Calu3 (cell line): ENCODE measurements at regions of chr7 and their contacts with region 1.

Region 1: DNA sequence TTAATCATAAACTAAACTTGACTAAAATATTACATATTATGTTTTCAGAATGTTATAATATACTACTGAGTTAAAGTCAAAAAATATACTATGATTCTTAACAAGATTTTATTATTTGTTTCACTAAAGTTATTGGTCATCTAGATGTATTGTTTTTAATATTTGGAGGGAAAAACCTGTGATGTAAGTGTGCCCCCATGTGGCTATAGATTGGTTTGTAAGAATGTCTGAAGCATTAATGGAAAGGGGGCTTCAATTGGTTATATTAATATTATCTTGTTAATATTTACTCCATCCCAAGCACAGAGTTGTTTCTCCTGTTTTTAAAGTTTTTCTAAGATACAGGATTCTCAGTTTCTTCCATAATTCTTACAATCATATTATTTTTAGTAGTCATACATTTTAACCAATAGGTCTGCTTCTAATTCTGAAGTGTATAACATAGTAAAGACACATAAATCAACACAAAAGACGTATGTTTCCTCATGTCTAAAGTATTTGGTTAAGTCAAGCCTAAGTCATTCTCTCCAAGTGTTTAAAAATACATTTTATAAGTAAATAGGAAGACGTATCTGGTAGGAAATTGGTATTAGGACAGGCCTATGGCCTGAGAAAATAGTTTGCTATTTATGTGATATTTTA is 58.0 kb downstream of the GNAT3 start:
- DNase-seq: peak; percentile 11
- H3K4me3 Mint-ChIP-seq: no peak overlapping the region
- H3K27ac Mint-ChIP-seq: no peak overlapping the region
- H3K4me1 Mint-ChIP-seq: peaks cover 7% of the 10 kb centered on the region
- H3K27me3 Mint-ChIP-seq: no peaks in the 10 kb centered on the region
- CTCF ChIP-seq: no peak

Region 2: GRCh38 chr7:80060218-80060806 is 393.5 kb before region 1 on chr7:
- CTCF ChIA-PET with region 1: no interaction called
- intact Hi-C with region 1: loop called (anchors 1 kb)
- DNase-seq: no peak
- H3K4me3 Mint-ChIP-seq: no peak overlapping the region
- H3K27ac Mint-ChIP-seq: no peak overlapping the region
- H3K4me1 Mint-ChIP-seq: no peaks in the 10 kb centered on the region
- H3K27me3 Mint-ChIP-seq: no peaks in the 10 kb centered on the region
- CTCF ChIP-seq: peak; percentile 15

Region 3: GRCh38 chr7:80095545-80095944 is 358.3 kb before region 1 on chr7:
- CTCF ChIA-PET with region 1: no interaction called
- intact Hi-C with region 1: loop called (anchors 10 kb)
- DNase-seq: no peak
- H3K4me3 Mint-ChIP-seq: no peak overlapping the region
- H3K27ac Mint-ChIP-seq: no peak overlapping the region
- H3K4me1 Mint-ChIP-seq: no peaks in the 10 kb centered on the region
- H3K27me3 Mint-ChIP-seq: no peaks in the 10 kb centered on the region
- CTCF ChIP-seq: no peak

Region 4: GRCh38 chr7:80134536-80135320 is 319.1 kb before region 1 on chr7 and contains the start of gene GNAI1:
- CTCF ChIA-PET with region 1: interaction called, 5 read pairs
- intact Hi-C with region 1: loop called (anchors 10 kb)
- DNase-seq: peak; percentile 75
- H3K4me3 Mint-ChIP-seq: peak within 1 kb of the TSS; percentile 93
- H3K27ac Mint-ChIP-seq: peak within 1 kb of the TSS; percentile 86
- H3K4me1 Mint-ChIP-seq: peaks cover 21% of the 10 kb centered on the region
- H3K27me3 Mint-ChIP-seq: no peaks in the 10 kb centered on the region
- CTCF ChIP-seq: no peak
- total RNA-seq, gene GNAI1: 14.7 and 20.5 TPM in 2 replicates

Region 5: DNA sequence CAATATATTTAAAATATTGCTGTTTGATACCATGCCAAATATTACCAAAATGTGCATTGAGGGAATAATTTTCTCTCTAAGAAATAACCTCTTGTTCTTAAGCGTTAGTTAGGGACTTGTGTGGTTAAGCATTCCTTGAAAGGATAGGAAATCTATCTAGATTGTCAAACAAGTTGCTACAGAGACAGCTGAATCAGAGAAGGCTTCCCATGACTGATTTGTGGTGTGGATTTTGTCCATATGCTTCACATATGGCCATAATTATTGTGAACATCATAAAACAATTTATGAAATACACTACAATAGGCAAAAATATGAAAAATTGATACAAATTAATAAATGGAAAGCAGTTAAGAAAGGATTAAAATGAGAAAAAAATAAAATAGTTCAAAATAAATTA is 38.3 kb before region 1 on chr7:
- CTCF ChIA-PET with region 1: no interaction called
- intact Hi-C with region 1: no loop called
- DNase-seq: no peak
- H3K4me3 Mint-ChIP-seq: no peak overlapping the region
- H3K27ac Mint-ChIP-seq: no peak overlapping the region
- H3K4me1 Mint-ChIP-seq: no peaks in the 10 kb centered on the region
- H3K27me3 Mint-ChIP-seq: no peaks in the 10 kb centered on the region
- CTCF ChIP-seq: no peak

Region 6: DNA sequence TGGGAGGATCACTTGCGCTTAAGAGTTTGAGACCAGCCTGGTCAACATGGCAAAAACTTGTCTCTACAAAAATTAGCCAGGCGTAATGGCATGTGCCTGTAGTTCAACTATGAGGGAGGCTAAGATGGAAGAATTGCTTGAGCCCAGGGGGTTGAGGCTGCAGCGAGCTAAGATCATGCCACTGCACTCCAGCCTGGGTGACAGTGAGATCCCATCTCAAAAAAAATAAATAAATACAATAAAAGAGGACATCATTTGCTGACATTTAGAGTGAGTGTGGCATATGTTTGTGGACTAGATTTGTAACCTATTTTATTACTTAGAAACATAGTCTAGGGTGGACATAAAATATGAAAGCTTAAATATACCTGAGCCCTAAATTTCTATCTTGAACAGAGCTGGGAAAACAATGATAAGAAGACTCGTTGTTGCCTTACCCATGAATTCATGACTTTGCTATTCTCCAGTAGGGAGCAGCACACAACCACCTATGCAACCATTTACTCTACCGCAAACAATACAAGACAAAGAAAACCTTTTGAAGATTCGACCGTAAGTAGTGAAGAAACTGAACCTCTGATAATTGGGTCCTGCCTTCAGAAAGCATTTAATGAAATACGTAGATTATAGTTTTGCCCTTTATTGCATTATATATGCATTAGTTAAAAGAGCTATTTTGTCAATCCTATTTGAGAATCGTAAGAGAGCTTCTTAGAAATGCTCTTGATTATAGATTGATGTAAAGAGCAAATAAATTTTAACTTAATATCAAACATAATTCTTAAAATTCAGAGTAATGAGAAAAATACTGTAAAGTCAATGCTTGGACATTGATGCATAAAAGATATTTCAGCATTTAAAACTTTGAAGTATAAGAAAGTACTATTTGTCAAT is 25.4 kb before region 1 on chr7:
- CTCF ChIA-PET with region 1: no interaction called
- intact Hi-C with region 1: loop called (anchors 1 kb)
- DNase-seq: peak; percentile 13
- H3K4me3 Mint-ChIP-seq: no peak overlapping the region
- H3K27ac Mint-ChIP-seq: no peak overlapping the region
- H3K4me1 Mint-ChIP-seq: no peaks in the 10 kb centered on the region
- H3K27me3 Mint-ChIP-seq: no peaks in the 10 kb centered on the region
- CTCF ChIP-seq: peak; percentile 32